ENCODE measurements at regions of chr3 and their contacts with region 1.

Region 1: GRCh38 chr3:119322835-119323722 is 28.9 kb downstream of the ARHGAP31 start:
- DNase-seq: peak; percentile 73
- ATAC-seq: peak; percentile 92
- H3K4me3 ChIP-seq: peak overlapping the region; percentile 78
- H3K27ac ChIP-seq: peak overlapping the region; percentile 97
- H3K4me1 ChIP-seq: peaks cover 31% of the 10 kb centered on the region
- H3K27me3 ChIP-seq: no peaks in the 10 kb centered on the region
- CTCF ChIP-seq: no peak
- EP300 ChIP-seq: peak; percentile 72 to 87; a peak in 3 of 4 replicates
- POLR2A ChIP-seq: peak; percentile 95
- RAD21 ChIP-seq: no peak

Region 2: DNA sequence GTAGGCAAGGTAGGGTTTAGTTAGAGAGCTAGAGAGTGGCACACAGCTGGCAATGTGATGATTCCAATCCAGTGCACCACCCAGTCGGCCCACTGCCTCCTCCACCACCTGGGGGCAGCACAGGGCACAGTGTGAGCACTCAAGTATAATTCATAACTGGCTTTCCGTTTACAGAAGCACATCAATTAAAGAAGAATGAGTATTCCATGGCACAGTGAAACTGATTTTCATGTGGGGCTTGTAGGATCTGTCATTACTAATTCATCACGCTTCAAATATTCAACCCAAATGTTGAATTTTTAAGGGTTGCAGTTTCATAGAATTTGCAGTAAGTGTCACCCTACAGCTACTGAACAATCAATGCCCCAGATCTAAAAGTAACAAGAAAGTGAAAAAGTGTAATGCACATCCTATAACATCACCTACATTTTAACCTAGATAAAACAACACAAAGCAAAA is 438.3 kb before region 1 on chr3:
- CTCF ChIA-PET with region 1: no interaction called
- POLR2A ChIA-PET with region 1: no interaction called
- RAD21 ChIA-PET with region 1: no interaction called
- SMC1A ChIA-PET with region 1: no interaction called
- in situ Hi-C with region 1: no loop called
- intact Hi-C with region 1: no loop called
- DNase-seq: no peak
- ATAC-seq: peak; percentile 92
- H3K4me3 ChIP-seq: no peak overlapping the region
- H3K27ac ChIP-seq: no peak overlapping the region
- H3K4me1 ChIP-seq: no peaks in the 10 kb centered on the region
- H3K27me3 ChIP-seq: no peaks in the 10 kb centered on the region
- CTCF ChIP-seq: peak; percentile 74 to 91 (median 88)
- EP300 ChIP-seq: no peak
- POLR2A ChIP-seq: no peak
- RAD21 ChIP-seq: peak; percentile 57

Region 3: GRCh38 chr3:119302697-119303551 is 20.2 kb before region 1 on chr3:
- CTCF ChIA-PET with region 1: interaction called, 3 read pairs
- POLR2A ChIA-PET with region 1: interaction called, 25 read pairs
- RAD21 ChIA-PET with region 1: interaction called, 30 read pairs
- SMC1A ChIA-PET with region 1: interaction called, 32 read pairs
- in situ Hi-C with region 1: no loop called
- intact Hi-C with region 1: no loop called
- DNase-seq: no peak
- ATAC-seq: peak; percentile 63
- H3K4me3 ChIP-seq: peak overlapping the region; percentile 13; the same call in 1 of the 2 replicates
- H3K27ac ChIP-seq: peak overlapping the region; percentile 62
- H3K4me1 ChIP-seq: peaks cover 49% of the 10 kb centered on the region
- H3K27me3 ChIP-seq: no peaks in the 10 kb centered on the region
- CTCF ChIP-seq: no peak
- EP300 ChIP-seq: no peak
- POLR2A ChIP-seq: no peak
- RAD21 ChIP-seq: no peak

Region 4: DNA sequence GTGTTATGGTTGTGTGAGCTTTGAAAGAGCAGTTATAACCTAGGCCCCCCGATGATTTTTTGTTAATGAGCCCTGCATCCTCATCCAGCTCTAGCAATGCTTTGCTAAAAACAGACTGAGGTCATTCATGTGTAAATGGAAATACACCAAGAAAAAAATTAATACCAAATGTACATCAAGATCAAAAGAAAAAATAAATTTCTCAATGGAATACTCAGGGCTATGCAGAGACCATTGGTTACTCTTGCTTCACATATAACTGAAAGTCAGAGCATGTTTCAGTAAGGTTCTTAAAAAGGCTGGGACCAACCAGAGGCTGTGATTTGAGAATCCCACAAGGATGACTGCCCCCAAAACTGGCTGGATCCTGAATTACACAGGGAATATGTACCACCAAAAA is 19.1 kb after region 1 on chr3:
- CTCF ChIA-PET with region 1: interaction called, 14 read pairs
- POLR2A ChIA-PET with region 1: no interaction called
- RAD21 ChIA-PET with region 1: no interaction called
- SMC1A ChIA-PET with region 1: interaction called, 16 read pairs
- in situ Hi-C with region 1: no loop called
- intact Hi-C with region 1: no loop called
- DNase-seq: no peak
- ATAC-seq: no peak
- H3K4me3 ChIP-seq: no peak overlapping the region
- H3K27ac ChIP-seq: no peak overlapping the region
- H3K4me1 ChIP-seq: peaks cover 7% of the 10 kb centered on the region
- H3K27me3 ChIP-seq: no peaks in the 10 kb centered on the region
- CTCF ChIP-seq: no peak
- EP300 ChIP-seq: no peak
- POLR2A ChIP-seq: no peak
- RAD21 ChIP-seq: no peak

Region 5: DNA sequence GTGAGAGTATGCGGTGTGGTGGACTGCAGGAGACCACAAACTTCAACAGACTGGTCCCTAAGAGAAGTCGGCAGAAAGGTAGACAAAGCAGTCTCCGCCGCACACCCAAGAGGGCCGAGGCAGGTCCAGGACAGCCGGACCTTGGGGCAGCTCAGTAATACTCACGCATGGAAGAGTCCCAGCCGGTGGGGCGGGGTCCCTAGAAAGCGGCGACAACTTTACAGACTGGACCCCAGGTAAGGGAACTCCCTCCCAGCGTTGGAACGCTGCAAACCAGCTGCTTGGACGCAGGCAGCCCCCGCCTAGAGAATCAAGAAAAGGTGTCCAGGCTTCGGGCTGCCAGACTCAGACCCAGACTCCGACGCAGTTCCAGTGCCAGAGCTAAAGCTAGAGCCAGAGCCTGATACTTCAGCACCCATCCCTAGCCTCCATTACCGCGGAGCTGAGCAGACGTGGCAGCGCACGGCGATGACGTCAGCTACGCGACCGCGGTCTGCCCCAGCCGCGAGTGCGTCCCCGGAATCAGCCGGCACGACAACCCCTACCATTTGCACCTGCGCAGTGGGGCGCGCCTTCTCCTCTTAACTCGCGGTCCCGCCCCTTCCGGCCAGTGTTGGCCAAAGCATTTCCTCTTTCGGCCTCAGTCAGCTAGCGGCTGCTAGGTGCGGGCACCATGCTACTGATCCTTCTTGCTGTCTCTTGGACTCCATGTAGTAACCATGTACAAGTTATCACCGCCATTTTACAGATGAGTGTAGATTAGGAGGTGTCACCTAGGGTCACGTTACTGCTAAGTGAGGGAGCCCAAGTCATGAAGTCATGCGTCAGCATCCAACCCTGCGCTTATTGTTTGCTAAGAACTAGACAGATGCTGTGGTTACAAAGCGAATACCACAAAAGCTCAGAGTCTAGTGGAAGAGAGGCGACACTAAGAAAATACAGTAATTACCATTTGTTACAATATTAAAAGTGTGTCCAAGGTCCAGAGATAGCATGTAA is 140.4 kb after region 1 on chr3 and contains the start of gene TMEM39A:
- CTCF ChIA-PET with region 1: interaction called, 3 read pairs
- POLR2A ChIA-PET with region 1: no interaction called
- RAD21 ChIA-PET with region 1: no interaction called
- SMC1A ChIA-PET with region 1: interaction called, 3 read pairs
- in situ Hi-C with region 1: no loop called
- intact Hi-C with region 1: loop called (anchors 1 kb)
- DNase-seq: peak; percentile 96
- ATAC-seq: peak; percentile 93
- H3K4me3 ChIP-seq: peak within 1 kb of the TSS; percentile 97
- H3K27ac ChIP-seq: peak within 1 kb of the TSS; percentile 90
- H3K4me1 ChIP-seq: peaks cover 9% of the 10 kb centered on the region
- H3K27me3 ChIP-seq: no peaks in the 10 kb centered on the region
- CTCF ChIP-seq: no peak
- EP300 ChIP-seq: peak; percentile 10 to 83; a peak in 2 of 4 replicates
- POLR2A ChIP-seq: peak; percentile 96
- RAD21 ChIP-seq: no peak
- polyA plus RNA-seq, gene TMEM39A: 10.8 to 21.2 TPM

Measured in GM12878 (cell line).